ENCODE measurements at regions of chr2 and their contacts with region 1.

Region 1: GRCh38 chr2:61426267-61426897 is 44.5 kb downstream of the USP34 start:
- DNase-seq: peak; percentile 33
- ATAC-seq: peak; percentile 94
- H3K4me3 ChIP-seq: no peak overlapping the region
- H3K27ac ChIP-seq: no peak overlapping the region
- H3K4me1 ChIP-seq: peaks cover 0 to 19% of the 10 kb centered on the region in 2 experiments; a peak in 1 of 4 replicates
- H3K27me3 ChIP-seq: no peaks in the 10 kb centered on the region
- CTCF ChIP-seq: peak; percentile 45 to 81 (median 78); a peak in 5 of 6 replicates
- POLR2A ChIP-seq: no peak
- RAD21 ChIP-seq: peak; percentile 69

Region 2: DNA sequence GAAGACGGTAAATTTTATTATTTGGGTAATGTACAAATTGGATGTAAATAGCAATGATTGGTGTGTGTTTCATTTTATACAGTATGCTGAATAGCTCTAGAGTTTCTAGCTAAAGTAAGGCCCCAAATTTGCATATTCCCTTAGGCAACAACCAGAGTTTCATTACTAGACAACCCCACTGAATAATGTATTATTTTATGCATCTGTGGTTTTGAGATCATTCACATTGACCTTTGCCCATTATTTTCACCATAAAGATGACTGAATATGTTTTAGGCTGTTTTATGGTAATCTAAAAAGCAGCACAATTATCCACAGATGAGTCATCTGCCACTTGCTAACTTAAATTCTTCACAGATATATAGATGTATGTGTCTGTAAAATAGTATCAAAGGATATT is 308.8 kb before region 1 on chr2:
- CTCF ChIA-PET with region 1: no interaction called
- POLR2A ChIA-PET with region 1: no interaction called
- RAD21 ChIA-PET with region 1: no interaction called
- intact Hi-C with region 1: no loop called
- DNase-seq: no peak
- ATAC-seq: no peak
- H3K4me3 ChIP-seq: no peak overlapping the region
- H3K27ac ChIP-seq: no peak overlapping the region
- H3K4me1 ChIP-seq: no peaks in the 10 kb centered on the region
- H3K27me3 ChIP-seq: no peaks in the 10 kb centered on the region
- CTCF ChIP-seq: no peak
- POLR2A ChIP-seq: no peak
- RAD21 ChIP-seq: no peak

Region 3: GRCh38 chr2:61658841-61659780 is 232.7 kb after region 1 on chr2:
- CTCF ChIA-PET with region 1: no interaction called
- POLR2A ChIA-PET with region 1: no interaction called
- RAD21 ChIA-PET with region 1: no interaction called
- intact Hi-C with region 1: loop called (anchors 2 kb)
- DNase-seq: peak; percentile 60
- ATAC-seq: peak; percentile 89
- H3K4me3 ChIP-seq: no peak overlapping the region
- H3K27ac ChIP-seq: no peak overlapping the region
- H3K4me1 ChIP-seq: peaks cover 6 to 13% of the 10 kb centered on the region in 2 experiments; a peak in 3 of 4 replicates
- H3K27me3 ChIP-seq: no peaks in the 10 kb centered on the region
- CTCF ChIP-seq: peak; percentile 51 to 71 (median 62); a peak in 5 of 6 replicates
- POLR2A ChIP-seq: no peak
- RAD21 ChIP-seq: peak; percentile 84

Measured in HCT116 (cell line).